RWPE1 (cell line): ENCODE measurements at regions of chr6 and their contacts with region 1.

Region 1: GRCh38 chr6:29763491-29764289 is 40.5 kb downstream of the HLA-F start:
- DNase-seq: peak; percentile 54
- H3K27ac ChIP-seq: peak overlapping the region; percentile 98
- CTCF ChIP-seq: no peak

Region 2: GRCh38 chr6:29752451-29753308 is 11.0 kb before region 1 on chr6:
- CTCF ChIA-PET with region 1: interaction called, 3 read pairs
- POLR2A ChIA-PET with region 1: interaction called, 21 read pairs
- DNase-seq: peak; percentile 76
- H3K27ac ChIP-seq: peak overlapping the region; percentile 93
- CTCF ChIP-seq: peak; percentile 97

Region 3: DNA sequence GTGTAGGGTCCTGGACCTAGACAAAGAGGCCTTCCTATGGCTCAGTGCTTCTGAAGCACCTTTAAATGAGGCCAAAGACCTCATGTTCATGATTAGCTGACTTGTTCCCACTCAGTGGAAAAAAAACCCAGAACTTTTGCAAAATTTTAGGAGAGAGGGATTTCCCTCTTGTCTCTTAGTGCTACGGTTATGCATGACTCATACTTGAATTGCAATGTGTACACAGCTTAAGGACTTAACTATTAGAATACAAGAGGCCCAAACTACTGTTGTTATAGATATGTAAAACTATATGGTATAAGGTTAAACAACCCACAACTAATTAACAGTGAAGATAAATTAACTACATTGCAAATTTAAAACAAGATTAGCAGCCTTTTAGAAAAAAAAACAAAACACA is 146.3 kb after region 1 on chr6:
- CTCF ChIA-PET with region 1: no interaction called
- POLR2A ChIA-PET with region 1: no interaction called
- DNase-seq: no peak
- H3K27ac ChIP-seq: no peak overlapping the region
- CTCF ChIP-seq: no peak